Activated naive CD4-positive, alpha-beta T cell treated with anti-CD3 and anti-CD28 coated beads for 36 hours (primary cell): ENCODE measurements at regions of chr13 and their contacts with region 1.

Region 1: DNA sequence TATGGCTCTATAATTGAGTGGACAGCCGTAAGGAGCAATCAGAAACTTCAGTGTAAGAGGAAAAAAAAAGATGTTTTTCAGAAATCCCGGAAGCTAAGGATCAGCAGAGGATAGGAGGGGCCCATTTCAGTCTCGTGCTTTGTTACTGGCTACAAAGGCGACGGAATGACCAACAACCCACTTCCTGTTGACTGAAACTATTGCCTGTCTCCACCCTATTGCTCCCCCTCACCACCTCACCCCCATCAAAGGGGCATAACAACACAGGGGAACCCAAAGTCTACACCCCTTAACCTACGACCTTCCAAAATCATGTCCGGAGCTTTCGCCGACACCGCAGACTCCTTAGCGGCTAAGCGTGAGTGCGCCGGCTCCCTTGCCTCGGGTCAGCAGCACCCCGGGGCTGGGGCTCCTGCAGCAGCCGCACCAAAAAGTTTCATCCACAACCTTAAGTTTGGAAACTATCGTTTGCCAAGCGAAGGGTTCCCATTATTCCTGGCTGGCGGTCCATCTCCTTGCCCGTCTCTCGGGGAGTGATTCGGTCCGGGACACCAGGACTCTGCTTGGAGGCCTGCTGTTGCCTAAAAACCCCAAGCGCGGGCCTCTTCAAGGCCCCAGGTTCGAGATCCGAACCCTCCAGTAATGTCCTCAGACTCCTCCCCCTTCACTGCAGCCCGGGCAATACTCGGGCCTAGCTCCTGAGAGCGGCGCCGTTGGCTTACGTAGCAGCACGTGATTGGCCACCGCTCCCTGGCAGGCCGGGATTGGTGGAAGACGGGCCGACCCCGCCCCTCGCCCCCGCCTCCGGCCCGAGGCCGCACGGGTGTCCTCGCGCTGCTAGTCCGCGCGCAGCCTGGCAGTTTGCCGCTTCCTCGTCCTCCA is at the start of gene TPP2:
- DNase-seq: peak; percentile 98
- H3K4me3 Mint-ChIP-seq: peak within 1 kb of the TSS; percentile 98
- H3K27ac Mint-ChIP-seq: peak within 1 kb of the TSS; percentile 100
- H3K4me1 Mint-ChIP-seq: peaks cover 55% of the 10 kb centered on the region
- H3K27me3 Mint-ChIP-seq: no peaks in the 10 kb centered on the region
- total RNA-seq, gene TPP2: 51.9 to 54.7 TPM

Region 2: GRCh38 chr13:102394158-102395053 is 202.0 kb before region 1 on chr13:
- CTCF ChIA-PET with region 1: no interaction called
- intact Hi-C with region 1: loop called (anchors 1 kb)
- DNase-seq: peak; percentile 97
- H3K4me3 Mint-ChIP-seq: peak overlapping the region; percentile 79
- H3K27ac Mint-ChIP-seq: peak overlapping the region; percentile 69
- H3K4me1 Mint-ChIP-seq: peaks cover 17% of the 10 kb centered on the region
- H3K27me3 Mint-ChIP-seq: peaks cover 16% of the 10 kb centered on the region

Region 3: GRCh38 chr13:102495663-102496062 is 100.7 kb before region 1 on chr13:
- CTCF ChIA-PET with region 1: no interaction called
- intact Hi-C with region 1: no loop called
- DNase-seq: no peak
- H3K4me3 Mint-ChIP-seq: no peak overlapping the region
- H3K27ac Mint-ChIP-seq: no peak overlapping the region
- H3K4me1 Mint-ChIP-seq: no peaks in the 10 kb centered on the region
- H3K27me3 Mint-ChIP-seq: peaks cover 19% of the 10 kb centered on the region

Region 4: DNA sequence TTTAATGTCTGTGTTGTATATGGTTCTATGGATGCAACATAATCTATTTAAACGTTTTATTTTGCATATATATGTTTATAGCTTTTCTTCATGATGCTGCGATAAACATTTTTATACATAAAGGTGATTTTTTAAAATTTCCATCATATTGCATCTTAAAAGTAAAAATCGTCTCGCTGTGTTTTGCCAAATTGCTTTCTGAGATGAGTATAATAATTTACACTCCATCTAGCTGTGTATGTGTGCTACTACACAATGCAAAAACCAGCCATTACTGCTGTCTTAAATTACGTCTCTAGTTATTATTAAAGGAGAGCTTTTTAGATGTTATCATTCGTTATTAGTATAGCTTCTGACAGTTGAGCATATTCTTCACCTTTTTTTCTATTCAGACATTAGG is 61.2 kb after region 1 on chr13:
- CTCF ChIA-PET with region 1: interaction called, 3 read pairs
- intact Hi-C with region 1: loop called (anchors 2 kb)
- DNase-seq: no peak
- H3K4me3 Mint-ChIP-seq: no peak overlapping the region
- H3K27ac Mint-ChIP-seq: no peak overlapping the region
- H3K4me1 Mint-ChIP-seq: no peaks in the 10 kb centered on the region
- H3K27me3 Mint-ChIP-seq: no peaks in the 10 kb centered on the region

Region 5: GRCh38 chr13:102724923-102725322 is 128.5 kb after region 1 on chr13:
- CTCF ChIA-PET with region 1: interaction called, 8 read pairs
- intact Hi-C with region 1: loop called (anchors 1 kb)
- DNase-seq: peak; percentile 9
- H3K4me3 Mint-ChIP-seq: no peak overlapping the region
- H3K27ac Mint-ChIP-seq: no peak overlapping the region
- H3K4me1 Mint-ChIP-seq: no peaks in the 10 kb centered on the region
- H3K27me3 Mint-ChIP-seq: peaks cover 4% of the 10 kb centered on the region

Region 6: GRCh38 chr13:102800145-102801041 is 204.0 kb after region 1 on chr13:
- CTCF ChIA-PET with region 1: interaction called, 8 read pairs
- intact Hi-C with region 1: loop called (anchors 1 kb)
- DNase-seq: peak; percentile 83
- H3K4me3 Mint-ChIP-seq: peak overlapping the region; percentile 93
- H3K27ac Mint-ChIP-seq: no peak overlapping the region
- H3K4me1 Mint-ChIP-seq: peaks cover 13% of the 10 kb centered on the region
- H3K27me3 Mint-ChIP-seq: peaks cover 21% of the 10 kb centered on the region